B cell (primary cell): ENCODE measurements at regions of chr20 and their contacts with region 1.

Region 1: GRCh38 chr20:53939572-53940359 is 130.6 kb downstream of the BCAS1 start:
- DNase-seq: peak; percentile 87
- ATAC-seq: peak; percentile 68
- H3K4me3 ChIP-seq: peak overlapping the region in 4 of 5 experiments; percentile 5 to 40 (median 19)
- H3K4me3 Mint-ChIP-seq: peak overlapping the region; percentile 49
- H3K27ac ChIP-seq: peak overlapping the region in 1 of 2 donors; percentile 79
- H3K27ac Mint-ChIP-seq: peak overlapping the region; percentile 91
- H3K4me1 ChIP-seq: peaks cover 60 to 88% of the 10 kb centered on the region in 2 donors
- H3K4me1 Mint-ChIP-seq: peaks cover 86% of the 10 kb centered on the region
- H3K27me3 ChIP-seq: no peaks in the 10 kb centered on the region
- H3K27me3 Mint-ChIP-seq: no peaks in the 10 kb centered on the region
- CTCF ChIP-seq: peak; percentile 82

Region 2: GRCh38 chr20:53216856-53217576 is 722.8 kb before region 1 on chr20:
- CTCF ChIA-PET with region 1: no interaction called
- POLR2A ChIA-PET with region 1: no interaction called
- intact Hi-C with region 1: loop called (anchors 5 kb)
- DNase-seq: peak; percentile 75
- ATAC-seq: peak; percentile 65
- H3K4me3 ChIP-seq: peak overlapping the region in 2 of 5 experiments; percentile 8 to 25
- H3K4me3 Mint-ChIP-seq: peak overlapping the region; percentile 43
- H3K27ac ChIP-seq: no peak overlapping the region
- H3K27ac Mint-ChIP-seq: no peak overlapping the region
- H3K4me1 ChIP-seq: peaks cover 4 to 13% of the 10 kb centered on the region in 2 donors
- H3K4me1 Mint-ChIP-seq: peaks cover 14% of the 10 kb centered on the region
- H3K27me3 ChIP-seq: peaks cover 0 to 9% (median 2%) of the 10 kb centered on the region in 4 experiments
- H3K27me3 Mint-ChIP-seq: peaks cover 14% of the 10 kb centered on the region
- CTCF ChIP-seq: peak; percentile 93

Region 3: DNA sequence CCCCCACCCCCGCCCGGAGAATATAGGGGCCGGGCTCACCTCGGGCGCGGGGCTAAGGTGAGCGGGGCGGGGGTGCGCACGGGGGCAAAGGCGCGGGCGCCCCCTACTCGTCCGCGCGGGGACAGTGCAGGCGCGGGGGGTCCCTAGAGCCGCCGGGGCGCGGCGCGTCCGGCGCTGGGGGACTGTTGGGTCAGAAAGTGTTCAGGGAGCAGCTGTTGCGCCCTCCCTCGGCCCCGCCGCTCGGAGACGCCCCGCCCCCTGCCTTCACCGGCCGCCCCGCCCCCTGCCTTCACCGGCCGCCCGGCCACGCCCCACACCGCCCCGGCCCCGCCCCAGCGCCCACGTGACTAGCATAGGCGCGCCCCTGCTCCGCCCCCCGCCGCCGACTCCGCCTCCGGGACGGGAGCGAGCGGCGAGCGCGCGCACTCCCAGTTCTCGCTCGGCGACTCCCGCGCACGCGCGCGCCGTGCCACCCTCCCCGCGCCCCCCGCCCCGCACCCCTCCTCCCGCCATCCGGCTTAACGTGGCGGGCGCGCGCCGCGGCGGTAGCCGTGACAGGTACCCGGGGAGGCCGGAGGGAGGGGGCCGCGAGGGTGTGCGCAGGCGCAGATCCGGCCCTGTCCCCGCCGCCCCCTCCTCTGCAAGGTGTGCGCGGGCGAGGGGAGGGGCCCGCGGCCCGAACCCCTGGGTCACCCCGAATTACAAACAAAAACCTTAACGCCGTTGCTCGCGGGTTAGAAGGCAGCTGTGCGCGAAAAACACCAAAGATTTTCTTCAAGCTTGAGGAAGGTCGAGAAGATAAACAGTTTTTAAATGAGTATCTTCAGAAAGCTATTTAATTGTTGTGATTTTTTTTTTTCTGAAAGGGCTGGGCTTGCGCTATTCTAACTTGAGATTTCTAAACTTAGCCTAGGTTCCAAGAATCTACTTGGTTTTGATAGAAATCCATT is 345.4 kb before region 1 on chr20:
- CTCF ChIA-PET with region 1: interaction called, 13 read pairs
- POLR2A ChIA-PET with region 1: interaction called, 9 read pairs
- intact Hi-C with region 1: no loop called
- DNase-seq: peak; percentile 95
- ATAC-seq: peak; percentile 70
- H3K4me3 ChIP-seq: peak overlapping the region; percentile 52 to 91 (median 85)
- H3K4me3 Mint-ChIP-seq: peak overlapping the region; percentile 92
- H3K27ac ChIP-seq: peak overlapping the region; percentile 92 to 96
- H3K27ac Mint-ChIP-seq: peak overlapping the region; percentile 96
- H3K4me1 ChIP-seq: peaks cover 26 to 27% of the 10 kb centered on the region in 2 donors
- H3K4me1 Mint-ChIP-seq: peaks cover 52% of the 10 kb centered on the region
- H3K27me3 ChIP-seq: no peaks in the 10 kb centered on the region
- H3K27me3 Mint-ChIP-seq: no peaks in the 10 kb centered on the region
- CTCF ChIP-seq: peak; percentile 14

Region 4: DNA sequence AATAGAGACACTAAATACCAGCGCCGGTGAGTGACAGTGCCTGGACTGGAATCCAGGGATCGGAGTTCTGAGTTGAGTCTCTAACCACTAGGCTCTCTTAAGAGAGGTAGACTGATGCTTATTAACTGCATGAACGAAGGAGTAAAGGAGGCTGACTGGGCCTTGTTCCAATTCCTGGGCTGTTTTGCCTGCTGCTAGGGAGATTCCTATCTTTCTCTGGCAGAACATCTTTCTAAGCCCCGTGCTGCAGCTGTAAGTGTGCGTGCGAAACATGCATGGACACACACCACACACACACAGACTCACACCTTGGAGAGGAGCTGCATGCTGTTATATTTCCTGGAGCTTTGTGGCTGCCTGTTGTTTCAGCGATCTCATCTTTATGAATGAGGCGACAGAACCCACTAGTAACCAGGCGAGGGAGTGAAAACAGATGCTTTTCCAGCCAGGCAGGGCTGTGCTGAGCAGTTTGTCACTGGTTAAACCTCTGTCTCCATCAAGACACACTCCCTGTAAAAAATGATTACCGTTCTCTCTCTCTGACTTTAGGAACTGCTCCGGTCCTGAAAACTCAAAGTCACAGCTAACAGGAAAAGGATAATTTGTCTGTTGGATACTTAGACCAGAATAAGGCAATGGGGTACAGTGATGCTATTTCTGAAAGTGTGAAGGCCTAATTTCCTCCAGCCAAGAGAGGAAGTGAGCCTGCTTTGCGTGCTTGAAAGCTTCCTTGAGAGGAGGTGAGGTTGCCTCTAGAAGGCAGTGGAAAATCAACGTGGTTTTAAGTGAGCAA is 188.7 kb before region 1 on chr20:
- CTCF ChIA-PET with region 1: interaction called, 10 read pairs
- POLR2A ChIA-PET with region 1: interaction called, 12 read pairs
- intact Hi-C with region 1: no loop called
- DNase-seq: peak; percentile 78
- ATAC-seq: peak; percentile 87
- H3K4me3 ChIP-seq: peak overlapping the region in 1 of 5 experiments; percentile 18
- H3K4me3 Mint-ChIP-seq: peak overlapping the region; percentile 69
- H3K27ac ChIP-seq: peak overlapping the region; percentile 75 to 87
- H3K27ac Mint-ChIP-seq: peak overlapping the region; percentile 95
- H3K4me1 ChIP-seq: peaks cover 64 to 71% of the 10 kb centered on the region in 2 donors
- H3K4me1 Mint-ChIP-seq: peaks cover 60% of the 10 kb centered on the region
- H3K27me3 ChIP-seq: no peaks in the 10 kb centered on the region
- H3K27me3 Mint-ChIP-seq: no peaks in the 10 kb centered on the region
- CTCF ChIP-seq: no peak

Region 5: GRCh38 chr20:53899351-53900167 is 40.2 kb before region 1 on chr20:
- CTCF ChIA-PET with region 1: interaction called, 10 read pairs
- POLR2A ChIA-PET with region 1: interaction called, 3 read pairs
- intact Hi-C with region 1: no loop called
- DNase-seq: peak; percentile 44
- ATAC-seq: peak; percentile 78
- H3K4me3 ChIP-seq: no peak overlapping the region
- H3K4me3 Mint-ChIP-seq: no peak overlapping the region
- H3K27ac ChIP-seq: peak overlapping the region; percentile 15 to 33
- H3K27ac Mint-ChIP-seq: peak overlapping the region; percentile 77
- H3K4me1 ChIP-seq: peaks cover 16 to 27% of the 10 kb centered on the region in 2 donors
- H3K4me1 Mint-ChIP-seq: peaks cover 43% of the 10 kb centered on the region
- H3K27me3 ChIP-seq: no peaks in the 10 kb centered on the region
- H3K27me3 Mint-ChIP-seq: no peaks in the 10 kb centered on the region
- CTCF ChIP-seq: no peak

Region 6: DNA sequence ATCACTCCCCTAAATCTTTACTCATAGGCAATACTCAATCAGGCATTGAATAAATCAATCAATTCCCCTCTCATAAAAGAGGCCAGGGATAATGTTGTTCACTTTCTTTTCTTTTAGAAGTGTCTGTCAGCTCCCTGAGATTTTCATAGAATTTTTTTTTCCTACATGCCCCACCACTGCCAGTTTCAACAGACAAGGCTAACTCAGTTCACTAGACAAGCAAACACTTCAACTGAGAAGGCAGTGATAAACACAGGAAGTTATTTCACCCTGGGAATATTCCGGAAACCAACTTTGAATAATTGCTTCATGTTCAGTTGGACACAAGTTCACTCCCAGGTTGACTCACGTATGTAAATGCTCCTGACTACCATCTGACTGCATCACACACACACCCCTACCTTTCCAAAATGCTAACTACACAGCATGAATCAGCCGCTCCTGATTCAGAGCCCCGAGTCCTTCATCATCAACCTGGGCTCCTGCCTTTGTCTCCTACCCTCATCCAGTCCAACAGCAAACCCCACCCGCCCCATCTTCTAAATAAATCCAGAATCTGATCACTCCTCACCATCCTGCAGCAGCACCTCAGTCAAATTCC is 13.2 kb before region 1 on chr20:
- CTCF ChIA-PET with region 1: interaction called, 593 read pairs
- POLR2A ChIA-PET with region 1: interaction called, 16 read pairs
- intact Hi-C with region 1: loop called (anchors 1 kb)
- DNase-seq: peak; percentile 87
- ATAC-seq: peak; percentile 82
- H3K4me3 ChIP-seq: peak overlapping the region in 3 of 5 experiments; percentile 3 to 13 (median 10)
- H3K4me3 Mint-ChIP-seq: peak overlapping the region; percentile 88
- H3K27ac ChIP-seq: peak overlapping the region; percentile 75 to 83
- H3K27ac Mint-ChIP-seq: peak overlapping the region; percentile 98
- H3K4me1 ChIP-seq: peaks cover 74 to 79% of the 10 kb centered on the region in 2 donors
- H3K4me1 Mint-ChIP-seq: peaks cover 81% of the 10 kb centered on the region
- H3K27me3 ChIP-seq: no peaks in the 10 kb centered on the region
- H3K27me3 Mint-ChIP-seq: no peaks in the 10 kb centered on the region
- CTCF ChIP-seq: no peak